ENCODE measurements at regions of chr17 and their contacts with region 1.

Region 1: GRCh38 chr17:19311421-19312215 is 50.9 kb downstream of the B9D1 start:
- DNase-seq: peak; percentile 54

Region 2: DNA sequence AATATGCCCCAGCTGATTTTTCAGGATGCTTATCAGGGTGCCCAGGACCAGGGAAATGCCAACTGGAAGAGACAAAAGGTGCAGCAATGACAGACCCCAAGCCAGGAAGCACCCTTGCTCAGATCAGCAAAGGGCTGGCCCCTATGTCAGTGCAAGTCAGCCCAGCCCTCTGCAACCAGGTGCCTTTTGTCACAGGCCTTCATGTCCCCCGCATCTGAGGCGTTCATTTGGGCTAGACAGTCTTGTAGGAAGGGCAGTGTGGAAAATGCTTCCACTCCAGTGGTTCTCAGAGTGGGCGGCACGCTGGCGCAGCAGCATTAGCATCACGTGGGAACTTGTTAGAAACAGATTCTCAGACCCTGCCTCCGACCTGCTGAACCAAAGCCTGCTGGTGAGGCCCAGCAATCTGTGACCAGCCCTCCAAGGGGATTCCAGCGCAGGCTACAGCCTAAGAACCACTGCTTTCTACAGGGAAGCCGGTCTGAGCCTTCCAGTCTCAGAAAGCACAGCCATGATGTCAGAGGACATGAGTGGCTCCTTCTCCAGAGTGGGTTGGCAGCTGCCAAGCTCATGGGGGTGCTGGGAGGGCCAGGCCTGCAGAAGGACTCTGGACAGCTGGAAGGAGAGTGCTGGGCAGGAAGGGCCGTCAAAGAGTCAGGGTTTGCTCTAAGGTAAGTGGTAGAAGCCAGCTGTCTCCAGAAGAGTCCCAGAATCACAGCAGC is 391.6 kb after region 1 on chr17:
- intact Hi-C with region 1: loop called in 1 of 2 experiments (anchors 2 kb)
- DNase-seq: peak; percentile 56

Measured in posterior vena cava (tissue), 2 donors.